PC-9 (cell line): ENCODE measurements at regions of chr12 and their contacts with region 1.

Region 1: GRCh38 chr12:31325877-31326631 is at the start of gene SINHCAF:
- DNase-seq: peak; percentile 97 to 100
- H3K4me3 ChIP-seq: peak within 1 kb of the TSS; percentile 91
- H3K27ac ChIP-seq: peak within 1 kb of the TSS; percentile 84
- H3K4me1 ChIP-seq: peaks cover 25% of the 10 kb centered on the region
- H3K27me3 ChIP-seq: no peaks in the 10 kb centered on the region
- CTCF ChIP-seq: no peak
- total RNA-seq, gene SINHCAF: 146 and 152 TPM in 2 replicates

Region 2: GRCh38 chr12:31005944-31006361 is 320.1 kb before region 1 on chr12:
- CTCF ChIA-PET with region 1: no interaction called
- POLR2A ChIA-PET with region 1: interaction called, 3 read pairs
- intact Hi-C with region 1: loop called (anchors 10 kb)
- DNase-seq: peak; percentile 95 to 96
- H3K4me3 ChIP-seq: no peak overlapping the region
- H3K27ac ChIP-seq: peak overlapping the region; percentile 95
- H3K4me1 ChIP-seq: peaks cover 67% of the 10 kb centered on the region
- H3K27me3 ChIP-seq: no peaks in the 10 kb centered on the region
- CTCF ChIP-seq: no peak

Region 3: DNA sequence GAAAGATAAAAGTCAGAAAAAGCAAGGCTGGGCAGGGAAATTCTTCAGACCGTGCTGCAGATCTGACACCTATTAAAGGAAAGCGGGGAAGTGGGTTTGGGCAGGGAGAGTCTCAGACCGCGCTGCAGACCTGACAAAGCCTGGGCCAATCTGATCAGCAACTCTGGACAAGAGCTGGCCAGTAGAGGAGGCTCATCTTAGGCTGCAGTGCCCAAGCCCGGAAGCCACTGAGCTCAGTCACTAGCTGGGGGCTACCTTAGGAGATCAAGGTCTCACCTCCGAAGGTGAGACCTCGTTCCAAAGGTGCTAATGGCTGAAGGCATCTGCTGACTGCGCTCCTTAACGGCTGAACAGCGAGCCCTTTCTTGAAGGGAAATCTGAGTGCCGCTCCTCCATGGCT is 60.3 kb before region 1 on chr12:
- CTCF ChIA-PET with region 1: no interaction called
- POLR2A ChIA-PET with region 1: no interaction called
- intact Hi-C with region 1: no loop called
- DNase-seq: no peak
- H3K4me3 ChIP-seq: no peak overlapping the region
- H3K27ac ChIP-seq: no peak overlapping the region
- H3K4me1 ChIP-seq: no peaks in the 10 kb centered on the region
- H3K27me3 ChIP-seq: no peaks in the 10 kb centered on the region
- CTCF ChIP-seq: no peak

Region 4: GRCh38 chr12:31362759-31363415 is 36.8 kb after region 1 on chr12:
- CTCF ChIA-PET with region 1: interaction called, 5 read pairs
- POLR2A ChIA-PET with region 1: interaction called, 46 read pairs
- intact Hi-C with region 1: loop called (anchors 2 kb)
- DNase-seq: peak; percentile 72 to 77
- H3K4me3 ChIP-seq: peak overlapping the region; percentile 47; the same call in 1 of the 2 replicates
- H3K27ac ChIP-seq: peak overlapping the region; percentile 63
- H3K4me1 ChIP-seq: peaks cover 24% of the 10 kb centered on the region
- H3K27me3 ChIP-seq: no peaks in the 10 kb centered on the region
- CTCF ChIP-seq: peak; percentile 29; the same call in 1 of the 2 replicates

Region 5: DNA sequence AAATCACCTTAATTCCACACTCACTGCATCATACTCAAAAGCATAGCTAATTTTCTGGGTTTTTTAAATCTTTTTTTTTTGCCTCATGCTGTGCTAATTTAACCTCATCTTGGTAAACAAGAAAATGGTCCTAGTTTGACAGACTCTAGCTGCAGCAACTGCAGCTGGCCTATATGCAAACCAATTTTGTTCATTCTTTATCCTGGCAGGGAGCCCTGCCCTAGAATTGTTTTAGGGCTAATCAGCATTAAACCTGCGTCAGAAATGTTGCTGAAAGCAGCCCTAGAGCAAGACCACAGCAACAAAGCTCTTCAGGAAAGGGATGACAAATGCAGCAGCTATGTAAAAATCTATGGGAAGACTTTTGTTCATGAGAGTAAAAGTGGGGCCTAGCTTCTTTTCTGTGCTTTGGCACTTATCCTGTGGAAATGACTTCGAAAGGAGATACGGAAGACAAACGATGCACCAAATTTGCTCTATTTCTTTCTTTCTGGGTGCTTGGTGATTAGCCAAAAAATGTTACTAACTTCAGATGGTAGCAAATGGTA is 192.7 kb after region 1 on chr12:
- CTCF ChIA-PET with region 1: no interaction called
- POLR2A ChIA-PET with region 1: interaction called, 5 read pairs
- intact Hi-C with region 1: loop called (anchors 1 kb)
- DNase-seq: peak; percentile 82 to 93
- H3K4me3 ChIP-seq: no peak overlapping the region
- H3K27ac ChIP-seq: peak overlapping the region; percentile 77
- H3K4me1 ChIP-seq: peaks cover 31% of the 10 kb centered on the region
- H3K27me3 ChIP-seq: no peaks in the 10 kb centered on the region
- CTCF ChIP-seq: no peak

Region 6: GRCh38 chr12:31558521-31558920 is 232.5 kb after region 1 on chr12:
- CTCF ChIA-PET with region 1: no interaction called
- POLR2A ChIA-PET with region 1: no interaction called
- intact Hi-C with region 1: no loop called
- DNase-seq: no peak
- H3K4me3 ChIP-seq: no peak overlapping the region
- H3K27ac ChIP-seq: no peak overlapping the region
- H3K4me1 ChIP-seq: no peaks in the 10 kb centered on the region
- H3K27me3 ChIP-seq: no peaks in the 10 kb centered on the region
- CTCF ChIP-seq: no peak

Region 7: DNA sequence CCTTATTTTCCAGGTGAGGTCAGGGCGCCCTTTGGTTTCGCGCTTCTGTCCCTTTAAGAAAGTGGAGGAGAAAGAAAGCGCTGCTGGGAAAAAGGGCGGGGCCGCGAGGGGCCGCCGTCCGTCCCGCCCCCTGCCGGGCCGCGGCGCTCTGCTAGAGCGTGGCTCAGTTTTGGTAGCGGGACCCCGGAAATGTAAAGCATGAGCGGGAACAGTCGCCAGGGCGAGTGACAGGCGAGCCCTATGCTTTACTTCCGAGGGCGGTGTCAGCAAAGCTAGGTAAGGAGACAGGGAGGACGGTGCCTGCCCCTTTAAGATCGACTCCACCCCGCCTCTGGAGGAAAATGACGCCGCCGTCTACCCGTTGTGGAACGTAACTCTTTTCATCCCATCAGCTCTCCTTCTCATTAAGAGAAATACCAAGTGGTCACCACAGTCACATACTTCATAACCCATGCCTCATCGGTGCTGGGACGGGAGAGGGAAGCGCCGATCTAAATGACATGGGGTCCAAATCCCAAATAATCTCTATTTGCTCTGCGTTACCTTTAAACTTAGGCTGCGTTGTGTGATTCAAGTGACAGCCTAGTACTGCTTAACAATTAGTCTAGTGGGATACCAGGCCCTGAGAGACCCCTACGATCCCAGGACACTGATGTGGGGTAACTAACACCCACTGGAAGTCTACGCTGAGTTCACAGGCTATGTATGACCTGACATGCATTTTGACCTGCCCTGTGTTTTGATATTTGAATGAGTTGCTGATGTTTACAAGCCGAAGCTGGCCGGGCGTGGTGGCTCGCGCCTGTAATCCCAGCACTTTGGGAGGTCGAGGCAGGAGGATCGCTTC is 333.3 kb after region 1 on chr12 and contains the start of gene ETFBKMT:
- CTCF ChIA-PET with region 1: no interaction called
- POLR2A ChIA-PET with region 1: no interaction called
- intact Hi-C with region 1: loop called (anchors 5 kb)
- DNase-seq: peak; percentile 94 to 97
- H3K4me3 ChIP-seq: peak within 1 kb of the TSS; percentile 62
- H3K27ac ChIP-seq: peak within 1 kb of the TSS; percentile 63
- H3K4me1 ChIP-seq: peaks cover 17% of the 10 kb centered on the region
- H3K27me3 ChIP-seq: no peaks in the 10 kb centered on the region
- CTCF ChIP-seq: peak; percentile 60
- total RNA-seq, gene ETFBKMT: 2.2 and 2.4 TPM in 2 replicates

Region 8: GRCh38 chr12:32896432-32897273 is 1570.6 kb after region 1 on chr12 and contains the start of gene PKP2:
- CTCF ChIA-PET with region 1: no interaction called
- POLR2A ChIA-PET with region 1: no interaction called
- intact Hi-C with region 1: loop called (anchors 10 kb)
- DNase-seq: peak; percentile 98 to 100
- H3K4me3 ChIP-seq: peak within 1 kb of the TSS; percentile 93
- H3K27ac ChIP-seq: peak within 1 kb of the TSS; percentile 74
- H3K4me1 ChIP-seq: peaks cover 66% of the 10 kb centered on the region
- H3K27me3 ChIP-seq: no peaks in the 10 kb centered on the region
- CTCF ChIP-seq: no peak
- total RNA-seq, gene PKP2: 88.1 and 88.7 TPM in 2 replicates